GM23248 (cell line): ENCODE measurements at regions of chr17 and their contacts with region 1.

Region 1: GRCh38 chr17:81471804-81472456 is 40.7 kb downstream of the ACTG1 start:
- DNase-seq: peak; percentile 97
- H3K4me3 ChIP-seq: peak overlapping the region; percentile 63
- H3K27ac ChIP-seq: peak overlapping the region; percentile 55
- H3K4me1 ChIP-seq: peaks cover 13% of the 10 kb centered on the region
- H3K27me3 ChIP-seq: no peaks in the 10 kb centered on the region

Region 2: DNA sequence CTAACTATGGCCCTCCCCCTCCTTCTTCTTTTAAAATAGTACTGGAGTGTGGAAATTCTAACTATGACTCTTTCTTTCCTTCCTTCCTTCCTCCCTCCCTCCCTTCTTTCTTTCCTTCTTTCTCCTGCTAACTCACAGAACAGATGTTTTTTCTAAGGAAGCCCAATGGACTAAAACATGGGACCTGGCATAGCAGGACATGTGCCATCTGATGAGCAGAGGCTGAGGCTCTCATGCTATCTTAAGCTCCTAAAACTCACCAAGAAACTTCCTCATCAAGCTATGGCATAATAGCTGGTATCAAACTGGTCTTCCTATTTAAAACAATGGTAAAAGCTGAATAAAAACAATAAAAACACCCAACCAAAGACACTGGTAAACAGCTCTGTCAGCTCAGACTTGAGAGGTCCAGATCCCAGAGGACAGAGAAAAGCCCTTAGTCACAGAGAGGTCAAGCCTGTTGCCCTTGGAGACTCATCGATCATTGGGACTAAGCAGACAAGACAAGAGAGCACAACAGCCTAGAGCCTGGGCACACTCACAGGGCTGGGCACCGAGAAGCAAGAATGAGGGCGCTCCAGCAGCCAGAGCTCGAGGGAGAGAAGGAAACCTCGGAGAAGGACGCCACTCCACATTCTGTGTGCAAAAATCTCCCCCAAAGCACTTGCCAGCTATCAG is 204.4 kb before region 1 on chr17:
- in situ Hi-C with region 1: loop called (anchors 10 kb)
- DNase-seq: no peak
- H3K4me3 ChIP-seq: no peak overlapping the region
- H3K27ac ChIP-seq: no peak overlapping the region
- H3K4me1 ChIP-seq: no peaks in the 10 kb centered on the region
- H3K27me3 ChIP-seq: no peaks in the 10 kb centered on the region